ENCODE measurements at regions of chr9 and their contacts with region 1.

Region 1: DNA sequence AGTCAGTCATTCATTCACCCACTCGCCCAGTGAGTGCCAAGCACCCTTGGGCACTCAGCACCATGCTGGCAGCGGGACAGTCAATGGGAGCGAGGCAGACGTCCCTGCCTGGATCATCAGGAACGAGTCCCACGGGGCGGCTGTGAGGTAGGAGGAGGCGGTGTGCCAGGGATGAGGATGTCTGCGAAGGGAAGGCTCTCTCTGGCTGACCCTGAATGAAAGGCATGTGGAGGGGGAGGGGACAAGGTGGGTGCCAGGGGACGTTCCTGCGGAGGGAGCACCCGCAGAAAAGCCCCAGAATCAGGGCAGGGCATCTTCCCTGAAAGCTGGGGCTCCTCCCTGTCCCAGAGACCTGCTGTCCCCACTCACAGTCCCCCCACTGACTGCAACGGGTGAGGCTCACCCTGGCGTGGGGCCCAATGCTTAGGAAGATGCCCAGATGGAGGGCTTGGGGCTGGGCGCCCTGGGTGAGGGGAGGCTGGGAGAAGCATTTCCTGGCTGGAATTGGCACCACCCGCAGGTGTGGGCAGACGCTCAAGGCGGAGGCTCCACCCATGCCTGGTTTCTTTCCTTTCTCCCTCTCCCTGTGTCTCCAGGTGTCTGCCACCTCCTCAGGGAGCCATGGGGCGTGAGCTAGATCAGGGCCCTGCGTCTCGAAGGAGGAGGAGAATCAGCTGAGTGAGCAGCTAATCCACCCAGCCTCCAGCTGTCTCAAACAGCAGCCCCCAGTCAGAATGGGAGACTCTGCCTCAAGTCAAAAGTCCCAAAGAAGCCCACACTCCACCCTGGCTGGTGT is 179.0 kb upstream of the PPP1R26 start:
- DNase-seq: no peak
- ATAC-seq: no peak
- H3K4me3 ChIP-seq: no peak overlapping the region
- H3K27ac ChIP-seq: no peak overlapping the region
- H3K4me1 ChIP-seq: peaks cover 0 to 5% (median 0%) of the 10 kb centered on the region in 12 donors
- H3K27me3 ChIP-seq: peaks cover 4 to 51% (median 31%) of the 10 kb centered on the region in 9 donors
- CTCF ChIP-seq: no peak
- POLR2A ChIP-seq: no peak

Region 2: DNA sequence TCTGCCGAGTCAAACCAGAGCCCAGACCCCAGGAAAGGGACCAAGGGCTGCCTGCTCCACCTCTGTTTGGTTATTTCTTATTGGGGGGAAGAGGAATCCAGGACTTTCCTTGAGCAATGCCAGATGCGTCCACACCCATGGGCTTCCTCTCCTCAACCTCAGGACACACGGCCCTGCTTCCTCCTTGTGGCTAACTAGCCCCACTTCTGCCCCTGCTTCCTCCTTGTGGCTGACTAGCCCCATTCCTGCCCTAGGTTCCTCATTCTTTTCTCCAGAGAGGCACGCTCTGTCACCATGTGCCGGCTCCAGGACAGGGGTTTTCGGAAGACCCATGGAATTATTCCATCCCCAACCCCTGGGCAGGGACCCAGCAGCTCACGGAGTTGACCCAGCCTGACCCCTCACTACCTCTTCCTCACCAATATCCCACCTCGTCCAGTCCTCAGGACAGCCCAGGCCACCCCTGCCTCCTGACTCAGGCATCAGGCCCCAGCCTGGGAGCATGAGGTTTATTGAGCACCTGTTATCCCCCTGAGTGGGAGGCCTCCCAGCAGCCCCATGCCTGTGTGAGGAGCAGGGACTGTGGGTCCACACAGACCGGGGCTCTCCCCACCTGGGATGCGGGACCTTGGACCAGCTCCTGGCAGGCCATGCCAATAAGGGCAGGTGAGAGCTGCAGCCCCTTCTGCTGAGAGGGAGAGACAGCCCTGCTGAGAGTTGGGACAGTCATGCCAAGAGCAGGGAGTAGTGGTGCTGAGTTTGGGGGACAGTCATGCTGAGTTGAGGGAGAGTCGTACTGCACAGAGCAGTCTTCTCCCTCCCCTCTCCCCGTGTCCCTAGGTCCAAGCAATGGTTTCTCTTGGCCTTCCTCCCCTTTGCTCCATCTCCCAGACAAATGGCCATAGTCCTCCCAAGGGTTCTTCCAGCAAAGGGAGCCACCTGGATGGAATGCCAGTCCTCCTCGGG is 371.1 kb before region 1 on chr9:
- intact Hi-C with region 1: no loop called
- DNase-seq: peak in 4 of 5 donors; percentile 55 to 71 (median 59)
- ATAC-seq: peak; percentile 65 to 92 (median 78)
- H3K4me3 ChIP-seq: no peak overlapping the region
- H3K27ac ChIP-seq: peak overlapping the region in 2 of 12 donors; percentile 9 to 79
- H3K4me1 ChIP-seq: peaks cover 0 to 55% (median 2%) of the 10 kb centered on the region in 12 donors
- H3K27me3 ChIP-seq: peaks cover 0 to 5% (median 0%) of the 10 kb centered on the region in 9 donors
- CTCF ChIP-seq: peak in 3 of 12 donors; percentile 12 to 18 (median 16)
- POLR2A ChIP-seq: no peak

Region 3: DNA sequence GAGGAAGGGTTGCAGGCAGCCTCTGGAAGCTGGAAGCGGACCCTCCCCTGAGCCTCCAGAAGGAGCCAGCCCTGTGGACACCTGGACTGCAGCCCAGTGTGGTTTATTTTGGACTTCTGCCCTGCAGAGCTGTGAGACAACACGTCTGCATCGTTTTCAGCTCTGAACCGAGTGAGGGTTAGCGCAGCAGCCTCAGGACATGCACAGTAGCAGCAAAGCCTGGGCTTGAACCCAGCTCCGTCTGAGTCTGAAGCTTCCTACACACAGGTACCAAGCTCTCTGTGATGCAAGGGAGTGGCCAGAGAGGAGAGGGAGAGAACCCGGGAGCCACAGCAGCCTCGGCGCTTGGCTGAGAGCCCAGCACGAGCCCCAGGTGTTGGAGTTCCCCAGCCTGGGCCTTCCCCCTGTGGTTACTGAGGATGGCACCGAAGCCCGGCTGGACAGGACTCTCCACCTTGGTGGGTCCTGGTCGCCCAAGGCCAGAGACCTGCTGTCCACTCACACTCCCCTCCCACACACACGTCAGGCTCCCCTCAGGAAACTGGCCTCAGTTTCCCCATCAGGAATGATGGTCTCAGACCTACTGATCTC is 84.9 kb before region 1 on chr9:
- intact Hi-C with region 1: loop called in 1 of 10 experiments (anchors 5 kb)
- DNase-seq: peak; percentile 23 to 70 (median 49)
- ATAC-seq: peak; percentile 56 to 68 (median 66)
- H3K4me3 ChIP-seq: no peak overlapping the region
- H3K27ac ChIP-seq: no peak overlapping the region
- H3K4me1 ChIP-seq: peaks cover 0 to 38% (median 5%) of the 10 kb centered on the region in 12 donors
- H3K27me3 ChIP-seq: peaks cover 0 to 48% (median 17%) of the 10 kb centered on the region in 9 donors
- CTCF ChIP-seq: no peak
- POLR2A ChIP-seq: no peak

Region 4: DNA sequence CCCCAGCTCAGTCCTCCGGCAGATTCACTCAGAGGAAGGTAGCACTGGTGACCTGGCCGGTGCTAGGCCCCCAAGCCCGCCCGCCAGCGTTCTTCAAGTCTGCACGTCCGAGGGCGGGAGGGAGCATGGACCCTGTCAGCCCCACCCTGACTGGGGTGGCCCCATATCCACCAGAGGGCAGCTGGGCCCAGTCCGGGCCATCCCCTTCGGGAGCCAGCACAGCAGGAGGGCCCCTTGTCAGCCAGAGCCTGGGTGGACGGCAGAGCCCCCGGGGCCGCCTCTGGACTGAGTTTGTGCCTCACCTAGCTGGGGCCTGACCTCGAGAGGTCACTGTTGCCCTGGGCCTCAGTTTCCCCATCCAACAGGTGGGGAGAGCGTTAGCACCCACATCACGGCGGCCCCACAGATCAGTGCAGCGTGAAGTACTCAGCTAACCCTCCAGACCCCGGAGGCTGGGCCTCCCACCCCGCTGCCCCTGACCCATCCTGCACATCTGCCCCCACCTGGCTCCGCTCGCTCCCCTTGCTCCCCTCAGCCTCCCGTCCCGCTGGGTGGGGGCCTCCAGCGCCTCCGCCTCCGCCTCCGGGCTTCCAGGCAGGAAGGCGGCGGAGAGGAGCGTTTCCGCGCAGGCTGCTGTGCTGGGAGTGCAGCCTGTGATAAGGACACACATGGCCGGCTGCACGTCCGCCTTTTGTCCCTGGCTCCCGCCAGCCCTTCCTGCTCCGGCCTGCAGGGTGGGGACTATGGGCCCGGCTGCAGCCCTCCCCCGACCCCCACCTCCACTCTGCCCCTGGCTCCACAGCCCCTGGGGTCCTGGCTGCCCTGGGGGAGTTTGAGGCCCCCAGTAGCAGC is 1345.6 kb after region 1 on chr9:
- intact Hi-C with region 1: no loop called
- DNase-seq: peak; percentile 88 to 93 (median 88)
- ATAC-seq: peak; percentile 49 to 73 (median 67)
- H3K4me3 ChIP-seq: peak overlapping the region; percentile 19 to 64 (median 52)
- H3K27ac ChIP-seq: peak overlapping the region; percentile 78 to 99 (median 94)
- H3K4me1 ChIP-seq: peaks cover 4 to 74% (median 43%) of the 10 kb centered on the region in 12 donors
- H3K27me3 ChIP-seq: peaks cover 0 to 3% (median 0%) of the 10 kb centered on the region in 9 donors
- CTCF ChIP-seq: peak in 8 of 12 donors; percentile 9 to 42 (median 26)
- POLR2A ChIP-seq: no peak